K562 (cell line): ENCODE measurements at regions of chr3 and their contacts with region 1.

Region 1: GRCh38 chr3:167740961-167741587 is 5.6 kb downstream of the SERPINI1 start:
- DNase-seq: peak in 2 of 4 experiments; percentile 53 to 75
- ATAC-seq: peak; percentile 87
- H3K4me3 ChIP-seq: no peak overlapping the region
- H3K27ac ChIP-seq: no peak overlapping the region
- H3K4me1 ChIP-seq: peaks cover 3 to 16% of the 10 kb centered on the region in 2 experiments; a peak in 3 of 5 replicates
- H3K27me3 ChIP-seq: no peaks in the 10 kb centered on the region
- CTCF ChIP-seq: peak; percentile 53 to 67 (median 62)
- EP300 ChIP-seq: no peak
- POLR2A ChIP-seq: no peak
- RAD21 ChIP-seq: peak; percentile 43 to 76; a peak in 3 of 4 replicates

Region 2: DNA sequence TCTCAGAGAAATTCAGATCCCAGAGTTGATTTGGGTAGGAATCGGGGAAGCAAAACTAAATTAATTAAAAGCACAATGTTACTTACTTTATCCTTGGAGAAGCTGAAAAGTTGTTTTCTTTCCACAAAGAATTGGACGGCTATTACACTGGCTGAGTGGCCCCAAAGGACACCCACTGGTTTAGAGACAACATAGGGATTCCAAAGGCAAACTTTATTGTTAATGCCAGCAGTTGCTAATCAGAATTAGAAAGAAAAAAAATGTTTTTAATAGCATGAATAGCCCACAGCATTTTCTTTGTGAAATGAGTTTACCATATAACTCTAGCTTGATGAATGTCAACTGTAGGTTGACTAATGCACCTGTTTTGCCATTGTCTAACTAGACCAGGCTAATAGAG is 139.0 kb before region 1 on chr3:
- CTCF ChIA-PET with region 1: no interaction called
- POLR2A ChIA-PET with region 1: no interaction called
- in situ Hi-C with region 1: no loop called
- intact Hi-C with region 1: loop called (anchors 10 kb)
- DNase-seq: no peak
- ATAC-seq: no peak
- H3K4me3 ChIP-seq: no peak overlapping the region
- H3K27ac ChIP-seq: no peak overlapping the region
- H3K4me1 ChIP-seq: no peaks in the 10 kb centered on the region
- H3K27me3 ChIP-seq: no peaks in the 10 kb centered on the region
- CTCF ChIP-seq: no peak
- EP300 ChIP-seq: no peak
- POLR2A ChIP-seq: no peak
- RAD21 ChIP-seq: no peak

Region 3: DNA sequence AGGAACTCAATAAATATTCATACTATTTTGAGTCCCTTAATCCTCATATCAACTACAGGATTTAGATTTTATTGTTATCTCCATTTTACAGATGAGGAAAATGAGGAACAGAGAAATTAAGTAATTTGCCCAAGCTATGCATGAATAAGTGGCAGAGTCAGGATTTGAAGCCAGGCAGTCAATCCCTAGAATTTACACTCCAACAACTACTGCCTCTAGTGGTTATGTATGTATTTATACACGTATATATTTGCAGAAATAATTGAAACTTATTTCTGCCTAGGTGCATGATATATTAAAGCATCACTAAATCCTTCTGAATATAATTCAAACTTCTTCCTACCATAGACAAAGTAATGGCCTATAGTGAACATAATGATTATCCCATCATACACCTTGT is 131.9 kb after region 1 on chr3:
- CTCF ChIA-PET with region 1: no interaction called
- POLR2A ChIA-PET with region 1: no interaction called
- in situ Hi-C with region 1: no loop called
- intact Hi-C with region 1: no loop called
- DNase-seq: no peak
- ATAC-seq: no peak; the same call in 2 of the 3 replicates
- H3K4me3 ChIP-seq: no peak overlapping the region
- H3K27ac ChIP-seq: no peak overlapping the region
- H3K4me1 ChIP-seq: no peaks in the 10 kb centered on the region
- H3K27me3 ChIP-seq: no peaks in the 10 kb centered on the region
- CTCF ChIP-seq: peak in 1 of 3 experiments; percentile 34; a peak in 2 of 6 replicates
- EP300 ChIP-seq: no peak
- POLR2A ChIP-seq: no peak
- RAD21 ChIP-seq: no peak